Naive thymus-derived CD4-positive, alpha-beta T cell (primary cell): ENCODE measurements at regions of chr10 and their contacts with region 1.

Region 1: GRCh38 chr10:124827474-124827873 is 25.9 kb downstream of the ABRAXAS2 start:
- DNase-seq: peak in 5 of 9 donors; percentile 4 to 21 (median 8)
- ATAC-seq: no peak
- H3K4me3 ChIP-seq: no peak overlapping the region
- H3K4me3 Mint-ChIP-seq: no peak overlapping the region
- H3K27ac ChIP-seq: no peak overlapping the region
- H3K27ac Mint-ChIP-seq: no peak overlapping the region
- H3K4me1 ChIP-seq: no peaks in the 10 kb centered on the region
- H3K4me1 Mint-ChIP-seq: no peaks in the 10 kb centered on the region
- H3K27me3 ChIP-seq: no peaks in the 10 kb centered on the region
- H3K27me3 Mint-ChIP-seq: no peaks in the 10 kb centered on the region

Region 2: DNA sequence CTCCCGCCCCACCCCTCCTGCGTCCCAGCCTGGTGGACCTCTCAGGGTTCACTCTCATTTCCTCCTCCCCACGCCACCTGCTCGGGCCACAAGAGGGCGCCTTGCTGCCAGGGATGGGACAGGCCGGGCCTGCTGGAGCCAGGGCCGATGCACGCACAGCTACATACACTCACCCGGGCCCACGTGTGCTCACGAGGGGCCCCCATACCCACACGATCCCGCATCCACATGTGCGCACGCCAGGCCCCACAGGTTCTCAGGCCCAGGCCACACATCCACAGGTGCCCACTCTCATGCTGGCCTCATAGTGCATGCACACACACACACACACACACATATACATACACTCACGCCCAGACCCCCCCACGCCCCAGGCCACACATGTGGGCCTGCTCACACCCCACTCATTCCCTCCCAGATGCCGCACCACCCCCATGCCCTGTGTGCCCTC is 297.2 kb before region 1 on chr10:
- CTCF ChIA-PET with region 1: interaction called, 4 read pairs
- POLR2A ChIA-PET with region 1: no interaction called
- intact Hi-C with region 1: loop called (anchors 1 kb)
- DNase-seq: peak; percentile 68 to 87 (median 80)
- ATAC-seq: peak; percentile 95
- H3K4me3 ChIP-seq: no peak overlapping the region
- H3K4me3 Mint-ChIP-seq: peak overlapping the region in 3 of 10 donors; percentile 18 to 59 (median 21)
- H3K27ac ChIP-seq: no peak overlapping the region
- H3K27ac Mint-ChIP-seq: peak overlapping the region in 3 of 9 donors; percentile 14 to 53 (median 38)
- H3K4me1 ChIP-seq: no peaks in the 10 kb centered on the region
- H3K4me1 Mint-ChIP-seq: peaks cover 3 to 16% (median 5%) of the 10 kb centered on the region in 7 donors
- H3K27me3 ChIP-seq: no peaks in the 10 kb centered on the region
- H3K27me3 Mint-ChIP-seq: peaks cover 0 to 7% (median 0%) of the 10 kb centered on the region in 5 donors

Region 3: DNA sequence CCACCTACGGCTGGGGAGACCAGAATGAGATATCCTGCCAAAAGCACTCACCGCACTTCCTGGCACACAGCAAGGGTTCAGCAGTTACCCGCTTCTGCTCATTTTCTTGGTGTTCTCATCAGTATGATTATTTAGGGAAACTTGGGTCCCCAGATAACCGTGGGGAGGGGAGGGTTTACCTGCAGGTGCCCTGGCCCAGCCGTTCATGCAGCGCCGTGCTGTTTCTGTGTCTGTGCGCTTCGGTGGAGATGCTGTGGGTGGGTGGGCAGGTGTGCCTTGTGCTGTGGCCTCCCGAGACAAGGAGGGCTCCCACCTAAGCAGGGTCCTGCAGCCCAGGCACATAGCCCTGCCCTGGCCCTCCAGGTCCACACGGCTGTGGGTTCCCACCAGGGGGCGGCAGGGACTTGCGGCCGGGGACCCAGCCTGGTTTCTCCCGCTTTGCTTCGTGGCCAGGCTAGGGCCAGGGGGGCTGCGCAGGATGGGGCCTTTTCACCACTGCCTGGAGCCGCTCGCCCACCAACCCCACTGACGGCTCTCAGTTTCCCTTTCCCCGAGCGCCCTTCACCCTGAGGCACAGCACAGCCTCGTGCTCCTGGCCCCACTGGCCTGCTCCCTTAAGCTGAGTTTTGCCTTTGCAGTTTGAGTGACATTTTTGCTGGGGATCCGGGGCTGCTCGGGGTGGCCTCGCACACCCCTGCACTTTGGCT is 287.4 kb before region 1 on chr10:
- CTCF ChIA-PET with region 1: interaction called, 5 read pairs
- POLR2A ChIA-PET with region 1: no interaction called
- intact Hi-C with region 1: loop called (anchors 1 kb)
- DNase-seq: peak; percentile 34 to 70 (median 58)
- ATAC-seq: peak; percentile 83
- H3K4me3 ChIP-seq: no peak overlapping the region
- H3K4me3 Mint-ChIP-seq: peak overlapping the region in 1 of 10 donors; percentile 16
- H3K27ac ChIP-seq: no peak overlapping the region
- H3K27ac Mint-ChIP-seq: peak overlapping the region in 2 of 9 donors; percentile 12 to 28
- H3K4me1 ChIP-seq: peaks cover 0 to 10% of the 10 kb centered on the region in 2 donors
- H3K4me1 Mint-ChIP-seq: peaks cover 0 to 10% (median 7%) of the 10 kb centered on the region in 7 donors
- H3K27me3 ChIP-seq: no peaks in the 10 kb centered on the region
- H3K27me3 Mint-ChIP-seq: no peaks in the 10 kb centered on the region

Region 4: GRCh38 chr10:124791378-124792348 is 35.8 kb before region 1 on chr10 and contains the start of gene EEF1AKMT2:
- CTCF ChIA-PET with region 1: no interaction called
- POLR2A ChIA-PET with region 1: no interaction called
- intact Hi-C with region 1: loop called (anchors 1 to 5 kb)
- DNase-seq: peak; percentile 68 to 88 (median 81)
- ATAC-seq: peak; percentile 99
- H3K4me3 ChIP-seq: peak within 1 kb of the TSS; percentile 92
- H3K4me3 Mint-ChIP-seq: peak within 1 kb of the TSS; percentile 90 to 100 (median 98)
- H3K27ac ChIP-seq: peak within 1 kb of the TSS; percentile 77
- H3K27ac Mint-ChIP-seq: peak within 1 kb of the TSS; percentile 89 to 96 (median 95)
- H3K4me1 ChIP-seq: peaks cover 5 to 9% of the 10 kb centered on the region in 2 donors
- H3K4me1 Mint-ChIP-seq: peaks cover 11 to 30% (median 21%) of the 10 kb centered on the region in 7 donors
- H3K27me3 ChIP-seq: no peaks in the 10 kb centered on the region
- H3K27me3 Mint-ChIP-seq: peaks cover 0 to 7% (median 0%) of the 10 kb centered on the region in 5 donors
- total RNA-seq, gene EEF1AKMT2: 11.5 to 23.0 (median 21.0) TPM

Region 5: GRCh38 chr10:124975977-124976514 is 148.6 kb after region 1 on chr10:
- CTCF ChIA-PET with region 1: no interaction called
- POLR2A ChIA-PET with region 1: no interaction called
- intact Hi-C with region 1: no loop called
- DNase-seq: no peak
- ATAC-seq: peak; percentile 65
- H3K4me3 ChIP-seq: no peak overlapping the region
- H3K4me3 Mint-ChIP-seq: peak overlapping the region in 1 of 10 donors; percentile 20
- H3K27ac ChIP-seq: no peak overlapping the region
- H3K27ac Mint-ChIP-seq: peak overlapping the region in 6 of 9 donors; percentile 18 to 71 (median 42)
- H3K4me1 ChIP-seq: peaks cover 0 to 23% of the 10 kb centered on the region in 2 donors
- H3K4me1 Mint-ChIP-seq: peaks cover 11 to 35% (median 26%) of the 10 kb centered on the region in 7 donors
- H3K27me3 ChIP-seq: no peaks in the 10 kb centered on the region
- H3K27me3 Mint-ChIP-seq: no peaks in the 10 kb centered on the region